ENCODE measurements at regions of chr15 and their contacts with region 1.

Region 1: DNA sequence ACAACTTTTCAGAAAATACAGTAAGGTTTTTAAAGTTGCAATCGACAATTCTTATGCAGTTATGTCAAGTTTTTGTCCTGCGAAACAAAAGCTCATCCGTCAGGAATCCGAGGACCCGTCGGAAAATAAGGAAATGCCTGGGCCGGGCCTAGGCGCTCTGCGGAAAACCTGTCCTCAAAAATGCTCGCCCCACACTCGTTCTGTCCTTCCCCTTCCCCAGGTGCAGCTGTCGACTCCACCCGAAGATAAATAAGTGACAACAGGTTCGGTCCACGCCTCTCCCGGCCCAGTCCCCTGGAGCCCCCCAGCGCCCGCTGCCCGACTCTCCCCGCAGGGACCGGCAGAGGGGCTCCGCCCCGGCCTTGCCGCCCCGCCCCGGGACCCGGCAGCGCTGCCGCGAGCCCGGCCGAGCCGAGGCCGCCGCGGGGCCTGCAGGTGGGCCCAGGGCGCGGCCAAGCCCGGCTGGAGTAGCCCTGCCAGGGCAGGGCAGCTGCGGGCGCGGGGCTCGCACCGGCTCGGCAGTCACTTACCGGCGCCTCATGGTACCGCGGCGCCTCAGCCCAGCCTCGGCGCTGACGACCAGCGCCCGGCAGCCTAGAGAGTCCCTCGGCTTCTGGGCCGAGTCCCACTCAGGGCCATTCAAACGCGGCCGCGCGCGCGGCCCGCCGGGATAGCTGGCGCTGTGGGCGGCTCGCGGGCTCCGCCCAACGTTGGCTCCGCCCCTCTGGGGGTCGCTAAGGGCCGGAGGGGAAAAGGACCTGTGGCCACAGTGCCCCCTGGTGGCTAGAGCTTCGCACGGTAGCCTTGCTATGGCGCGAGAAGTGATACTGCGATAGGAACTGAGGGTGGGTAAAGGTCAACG is at the start of gene KATNBL1:
- DNase-seq: peak; percentile 89 to 100 (median 95)
- ATAC-seq: peak; percentile 94
- H3K4me3 ChIP-seq: peak within 1 kb of the TSS; percentile 70
- H3K4me3 Mint-ChIP-seq: peak within 1 kb of the TSS; percentile 95
- H3K27ac ChIP-seq: no peak within 1 kb of the TSS
- H3K27ac Mint-ChIP-seq: peak within 1 kb of the TSS; percentile 84
- H3K4me1 ChIP-seq: peaks cover 9% of the 10 kb centered on the region
- H3K4me1 Mint-ChIP-seq: peaks cover 30% of the 10 kb centered on the region
- H3K27me3 ChIP-seq: no peaks in the 10 kb centered on the region
- H3K27me3 Mint-ChIP-seq: no peaks in the 10 kb centered on the region
- CTCF ChIP-seq: peak; percentile 81
- total RNA-seq, gene KATNBL1: 13.0 to 14.6 TPM

Region 2: GRCh38 chr15:33737687-33738601 is 471.7 kb before region 1 on chr15:
- CTCF ChIA-PET with region 1: no interaction called
- POLR2A ChIA-PET with region 1: no interaction called
- intact Hi-C with region 1: loop called in 1 of 2 experiments (anchors 5 kb)
- DNase-seq: peak in 11 of 14 experiments; percentile 3 to 42 (median 11)
- ATAC-seq: no peak
- H3K4me3 ChIP-seq: no peak overlapping the region
- H3K4me3 Mint-ChIP-seq: no peak overlapping the region
- H3K27ac ChIP-seq: no peak overlapping the region
- H3K27ac Mint-ChIP-seq: no peak overlapping the region
- H3K4me1 ChIP-seq: no peaks in the 10 kb centered on the region
- H3K4me1 Mint-ChIP-seq: no peaks in the 10 kb centered on the region
- H3K27me3 ChIP-seq: no peaks in the 10 kb centered on the region
- H3K27me3 Mint-ChIP-seq: no peaks in the 10 kb centered on the region
- CTCF ChIP-seq: peak; percentile 69

Region 3: DNA sequence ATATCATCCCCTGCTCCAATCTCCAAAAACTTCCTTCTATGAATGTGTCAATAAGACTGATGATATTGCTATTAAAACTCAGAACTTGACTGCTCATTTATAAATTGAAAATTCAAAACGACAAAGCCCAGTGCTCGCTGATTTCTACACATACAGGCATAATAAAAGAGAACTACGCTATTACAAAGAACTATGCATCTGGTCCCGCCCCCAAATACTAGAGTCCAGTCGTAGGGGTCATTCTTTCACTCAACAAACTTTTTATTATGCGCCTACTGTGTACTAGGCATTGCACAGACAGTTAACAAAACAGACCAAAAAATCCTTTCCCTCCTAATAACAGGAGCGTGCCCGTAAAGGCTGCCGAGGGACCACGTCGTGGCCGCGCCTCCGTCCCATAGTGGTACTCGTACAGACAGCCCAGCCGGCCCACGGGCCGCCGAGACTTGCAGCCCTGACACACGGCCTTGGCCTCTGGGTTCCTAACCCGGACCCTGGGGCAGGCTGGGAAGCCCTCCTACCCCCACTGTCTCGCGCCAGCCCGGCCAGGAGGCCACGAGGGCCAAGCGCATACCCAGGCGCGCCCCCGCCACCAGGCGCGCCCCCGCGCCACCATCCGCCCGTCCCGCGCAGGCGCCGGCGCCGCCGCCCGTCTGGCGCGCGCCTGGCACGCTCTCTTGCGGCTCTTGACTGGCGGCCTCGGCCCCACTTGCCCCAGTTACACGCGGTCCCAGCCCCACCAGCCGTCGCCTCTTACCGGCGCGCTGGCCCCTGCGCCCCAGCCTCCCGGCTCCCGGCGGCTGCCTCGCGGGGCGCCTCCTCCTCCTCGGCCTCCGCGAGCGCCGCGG is 171.4 kb before region 1 on chr15:
- CTCF ChIA-PET with region 1: interaction called, 4 read pairs
- POLR2A ChIA-PET with region 1: interaction called, 11 read pairs
- intact Hi-C with region 1: loop called in 1 of 2 experiments (anchors 2 kb)
- DNase-seq: peak; percentile 51 to 91 (median 68)
- ATAC-seq: peak; percentile 81
- H3K4me3 ChIP-seq: peak overlapping the region; percentile 76
- H3K4me3 Mint-ChIP-seq: peak overlapping the region; percentile 91
- H3K27ac ChIP-seq: peak overlapping the region; percentile 55 to 57
- H3K27ac Mint-ChIP-seq: peak overlapping the region; percentile 90
- H3K4me1 ChIP-seq: peaks cover 7% of the 10 kb centered on the region
- H3K4me1 Mint-ChIP-seq: peaks cover 20% of the 10 kb centered on the region
- H3K27me3 ChIP-seq: no peaks in the 10 kb centered on the region
- H3K27me3 Mint-ChIP-seq: no peaks in the 10 kb centered on the region
- CTCF ChIP-seq: no peak

Region 4: DNA sequence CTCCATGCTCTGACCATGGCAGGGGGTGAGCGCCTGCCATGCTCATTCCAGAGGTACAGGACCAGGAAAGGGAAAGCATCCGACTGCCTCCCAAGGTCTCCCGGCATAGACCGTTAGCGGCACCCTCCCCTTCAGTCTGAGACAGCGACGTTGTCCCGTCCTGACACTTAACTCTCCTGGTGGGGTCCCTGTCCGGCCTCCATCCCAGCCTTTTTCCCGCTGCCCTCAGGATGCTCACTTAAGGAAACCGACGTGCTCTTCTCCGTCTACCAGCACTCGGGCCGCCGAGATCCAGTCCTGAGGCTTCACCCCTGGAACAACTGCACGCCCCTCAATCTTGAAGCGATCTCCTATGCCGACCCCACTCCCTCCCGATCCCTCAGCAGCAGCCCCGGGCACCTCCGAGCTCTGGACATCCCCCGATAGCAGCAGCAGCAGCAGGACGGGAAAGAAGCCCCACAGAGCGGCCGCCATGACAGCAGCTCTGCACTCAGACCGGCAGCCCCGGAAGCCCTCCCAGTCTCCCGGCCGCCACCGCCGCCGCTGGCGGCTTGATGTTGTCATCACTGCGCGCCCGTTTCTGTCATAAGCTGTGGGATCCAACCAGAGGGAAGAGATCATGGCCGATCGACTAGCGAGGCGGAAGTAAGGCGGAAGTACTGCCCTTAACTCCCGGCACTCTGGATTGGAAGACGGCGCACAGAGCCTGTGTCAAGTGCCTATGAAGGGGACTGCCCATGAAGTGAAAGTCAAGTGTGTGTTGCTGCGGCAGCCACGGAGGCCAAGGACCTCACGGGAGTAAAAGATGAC is 108.1 kb before region 1 on chr15 and contains the starts of genes EMC7 and PGBD4:
- CTCF ChIA-PET with region 1: interaction called, 3 read pairs
- POLR2A ChIA-PET with region 1: interaction called, 25 read pairs
- intact Hi-C with region 1: no loop called
- DNase-seq: peak; percentile 97 to 100 (median 99)
- ATAC-seq: peak; percentile 96
- H3K4me3 ChIP-seq: peak within 1 kb of the TSS; percentile 80
- H3K4me3 Mint-ChIP-seq: peak within 1 kb of the TSS; percentile 91
- H3K27ac ChIP-seq: peak within 1 kb of the TSS; percentile 86 to 97
- H3K27ac Mint-ChIP-seq: peak within 1 kb of the TSS; percentile 96
- H3K4me1 ChIP-seq: peaks cover 20% of the 10 kb centered on the region
- H3K4me1 Mint-ChIP-seq: peaks cover 54% of the 10 kb centered on the region
- H3K27me3 ChIP-seq: no peaks in the 10 kb centered on the region
- H3K27me3 Mint-ChIP-seq: no peaks in the 10 kb centered on the region
- CTCF ChIP-seq: no peak
- total RNA-seq, gene EMC7: 54.0 to 54.6 TPM
- total RNA-seq, gene PGBD4: 2.3 to 2.6 TPM

Region 5: DNA sequence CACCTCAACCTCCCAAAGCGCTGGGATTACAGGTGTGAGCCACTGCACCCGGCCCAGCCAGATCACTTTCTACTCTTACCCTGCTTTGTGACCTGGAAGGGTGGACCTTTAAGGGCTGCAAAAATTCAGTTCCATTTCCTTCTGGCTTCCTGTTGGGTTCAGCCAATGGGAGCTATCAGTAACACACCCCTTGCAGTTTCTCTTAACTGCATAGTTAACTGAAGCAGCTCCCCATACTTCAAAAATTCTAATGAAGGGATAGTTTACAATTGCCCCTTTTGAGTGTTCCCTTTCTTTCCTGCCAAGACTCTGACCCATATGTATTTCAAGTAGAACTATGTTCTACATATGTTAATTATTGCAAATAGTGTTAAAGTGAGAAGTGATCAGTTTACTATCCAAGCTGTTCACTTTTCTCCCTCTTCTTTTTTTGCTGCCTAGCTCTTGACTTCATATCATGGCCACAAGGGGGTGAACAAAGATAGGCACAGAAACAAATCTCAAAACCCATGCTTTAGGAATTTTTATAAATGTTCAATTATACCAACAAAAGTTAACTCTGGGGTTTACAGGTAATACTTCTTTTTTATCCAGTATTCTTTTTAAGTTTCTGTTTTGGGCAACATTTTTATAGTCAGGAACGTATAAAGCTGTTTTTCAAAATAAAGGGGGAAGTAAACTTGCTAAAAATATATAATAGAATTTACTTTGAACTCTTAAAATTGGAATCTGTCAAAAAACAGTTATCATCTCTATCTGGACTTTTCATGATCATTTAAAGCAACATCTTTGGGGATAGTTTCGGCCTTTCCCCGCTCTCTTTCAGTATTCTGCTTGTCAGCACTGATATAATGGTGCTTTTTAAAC is 99.6 kb before region 1 on chr15:
- CTCF ChIA-PET with region 1: interaction called, 20 read pairs
- POLR2A ChIA-PET with region 1: interaction called, 3 read pairs
- intact Hi-C with region 1: no loop called
- DNase-seq: peak in 3 of 14 experiments; percentile 29 to 48 (median 44)
- ATAC-seq: peak; percentile 24
- H3K4me3 ChIP-seq: no peak overlapping the region
- H3K4me3 Mint-ChIP-seq: no peak overlapping the region
- H3K27ac ChIP-seq: no peak overlapping the region
- H3K27ac Mint-ChIP-seq: no peak overlapping the region
- H3K4me1 ChIP-seq: no peaks in the 10 kb centered on the region
- H3K4me1 Mint-ChIP-seq: no peaks in the 10 kb centered on the region
- H3K27me3 ChIP-seq: no peaks in the 10 kb centered on the region
- H3K27me3 Mint-ChIP-seq: no peaks in the 10 kb centered on the region
- CTCF ChIP-seq: peak; percentile 31

Region 6: DNA sequence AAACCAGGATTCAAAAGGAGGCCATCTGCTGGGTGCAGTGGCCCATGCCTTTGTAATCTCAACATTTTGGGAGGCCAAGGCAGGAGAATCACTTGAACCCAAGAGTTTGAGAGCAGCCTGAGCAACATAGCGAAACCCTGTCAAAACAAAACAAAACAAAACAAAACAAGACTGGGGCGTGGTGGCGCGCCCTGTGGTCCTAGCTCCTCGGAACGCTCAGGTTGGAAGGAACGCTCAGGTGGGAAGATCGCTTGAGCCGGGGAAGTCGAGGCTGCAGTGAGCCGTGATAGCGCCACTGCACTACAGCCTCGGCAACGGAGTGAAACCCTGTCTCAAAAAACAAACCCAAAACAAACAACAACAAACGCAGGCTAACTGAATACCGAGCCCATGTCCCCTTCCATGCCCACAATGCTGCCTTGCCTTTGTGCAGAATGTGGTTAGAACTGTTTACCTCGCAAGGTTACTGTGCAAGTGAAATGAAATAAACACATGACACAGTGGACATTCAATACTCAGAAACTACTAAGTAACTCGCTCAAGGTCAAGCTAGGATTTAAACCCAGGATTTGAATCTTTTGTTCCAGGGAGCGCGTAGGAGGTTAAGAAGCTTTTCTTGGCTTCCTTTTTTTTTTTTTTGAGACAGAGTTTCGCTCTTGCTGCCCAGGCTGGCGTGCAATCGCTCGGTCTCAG is 14.4 kb after region 1 on chr15:
- CTCF ChIA-PET with region 1: interaction called, 18 read pairs
- POLR2A ChIA-PET with region 1: interaction called, 10 read pairs
- intact Hi-C with region 1: loop called in 1 of 2 experiments (anchors 1 kb)
- DNase-seq: peak in 2 of 14 experiments; percentile 6 to 21
- ATAC-seq: no peak
- H3K4me3 ChIP-seq: peak overlapping the region; percentile 68
- H3K4me3 Mint-ChIP-seq: peak overlapping the region; percentile 97
- H3K27ac ChIP-seq: peak overlapping the region in 1 of 2 donors; percentile 81
- H3K27ac Mint-ChIP-seq: peak overlapping the region; percentile 99
- H3K4me1 ChIP-seq: peaks cover 20% of the 10 kb centered on the region
- H3K4me1 Mint-ChIP-seq: peaks cover 23% of the 10 kb centered on the region
- H3K27me3 ChIP-seq: no peaks in the 10 kb centered on the region
- H3K27me3 Mint-ChIP-seq: peaks cover 5% of the 10 kb centered on the region
- CTCF ChIP-seq: no peak